PC-3 (cell line): ENCODE measurements at regions of chr4 and their contacts with region 1.

Region 1: GRCh38 chr4:68655764-68656444 is 14.5 kb downstream of the UGT2B15 start:
- DNase-seq: peak; percentile 90
- ATAC-seq: peak; percentile 72
- H3K4me3 ChIP-seq: peak overlapping the region; percentile 46
- H3K27ac ChIP-seq: peak overlapping the region; percentile 86
- H3K4me1 ChIP-seq: peaks cover 36% of the 10 kb centered on the region
- H3K27me3 ChIP-seq: no peaks in the 10 kb centered on the region
- CTCF ChIP-seq: no peak

Region 2: DNA sequence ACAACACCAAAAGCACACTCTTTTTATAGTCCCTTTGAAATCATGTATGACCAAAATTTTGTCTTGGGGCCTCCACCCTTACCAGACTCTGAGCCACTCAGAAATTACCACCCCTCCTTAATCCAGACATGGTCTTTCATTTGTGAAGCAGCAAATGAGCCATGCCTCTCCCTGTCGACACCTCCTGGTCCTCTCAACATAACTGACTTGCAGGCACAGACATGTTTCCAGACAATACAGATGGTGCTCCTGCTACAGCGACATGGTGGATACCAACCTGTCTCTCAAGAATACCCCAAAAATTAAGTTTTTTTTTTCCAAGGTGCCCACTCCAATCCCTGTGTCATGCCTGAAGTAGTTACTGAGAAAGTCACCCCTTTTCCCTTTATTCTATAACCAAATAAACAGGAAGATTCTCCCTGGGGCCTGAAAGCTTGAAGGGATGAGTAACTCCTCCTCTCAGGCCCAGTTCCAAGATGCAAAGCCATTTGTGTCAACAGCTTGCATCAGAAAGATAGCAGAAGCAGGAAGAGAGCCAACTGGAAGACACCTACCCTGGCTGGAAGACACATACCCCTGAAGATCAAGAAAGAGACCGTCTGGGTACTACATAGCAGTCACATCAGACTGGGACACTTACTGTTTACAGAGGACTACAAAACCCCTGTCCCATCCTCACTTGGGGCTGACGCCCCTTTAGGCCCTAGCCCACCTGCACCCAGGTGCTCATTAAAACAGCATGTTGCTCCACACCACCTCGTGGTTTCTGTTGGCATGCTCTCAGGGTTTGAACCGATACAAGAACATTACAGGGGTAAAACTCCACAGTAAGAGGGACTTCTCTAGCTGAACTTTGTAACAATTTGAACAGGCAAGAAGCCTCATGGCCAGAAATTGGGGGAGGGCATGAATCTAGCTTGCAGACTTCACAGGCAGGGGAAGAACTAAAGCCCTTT is 74.2 kb before region 1 on chr4:
- CTCF ChIA-PET with region 1: no interaction called
- POLR2A ChIA-PET with region 1: no interaction called
- intact Hi-C with region 1: no loop called
- DNase-seq: peak; percentile 36
- ATAC-seq: no peak
- H3K4me3 ChIP-seq: no peak overlapping the region
- H3K27ac ChIP-seq: peak overlapping the region; percentile 27
- H3K4me1 ChIP-seq: peaks cover 9% of the 10 kb centered on the region; the same call in 1 of the 2 replicates
- H3K27me3 ChIP-seq: no peaks in the 10 kb centered on the region
- CTCF ChIP-seq: no peak

Region 3: GRCh38 chr4:68630373-68630772 is 25.5 kb before region 1 on chr4:
- CTCF ChIA-PET with region 1: no interaction called
- POLR2A ChIA-PET with region 1: no interaction called
- intact Hi-C with region 1: no loop called
- DNase-seq: peak; percentile 36
- ATAC-seq: no peak
- H3K4me3 ChIP-seq: no peak overlapping the region
- H3K27ac ChIP-seq: no peak overlapping the region
- H3K4me1 ChIP-seq: no peaks in the 10 kb centered on the region
- H3K27me3 ChIP-seq: no peaks in the 10 kb centered on the region
- CTCF ChIP-seq: no peak

Region 4: GRCh38 chr4:68810919-68811318 is 155.0 kb after region 1 on chr4:
- CTCF ChIA-PET with region 1: no interaction called
- POLR2A ChIA-PET with region 1: no interaction called
- intact Hi-C with region 1: loop called (anchors 5 kb)
- DNase-seq: no peak
- ATAC-seq: no peak
- H3K4me3 ChIP-seq: no peak overlapping the region
- H3K27ac ChIP-seq: no peak overlapping the region
- H3K4me1 ChIP-seq: no peaks in the 10 kb centered on the region
- H3K27me3 ChIP-seq: no peaks in the 10 kb centered on the region
- CTCF ChIP-seq: no peak

Region 5: GRCh38 chr4:68864438-68865187 is 208.7 kb after region 1 on chr4:
- CTCF ChIA-PET with region 1: no interaction called
- POLR2A ChIA-PET with region 1: no interaction called
- intact Hi-C with region 1: loop called (anchors 10 kb)
- DNase-seq: peak; percentile 48
- ATAC-seq: peak; percentile 71
- H3K4me3 ChIP-seq: no peak overlapping the region
- H3K27ac ChIP-seq: peak overlapping the region; percentile 42
- H3K4me1 ChIP-seq: peaks cover 21% of the 10 kb centered on the region
- H3K27me3 ChIP-seq: no peaks in the 10 kb centered on the region
- CTCF ChIP-seq: no peak

Region 6: DNA sequence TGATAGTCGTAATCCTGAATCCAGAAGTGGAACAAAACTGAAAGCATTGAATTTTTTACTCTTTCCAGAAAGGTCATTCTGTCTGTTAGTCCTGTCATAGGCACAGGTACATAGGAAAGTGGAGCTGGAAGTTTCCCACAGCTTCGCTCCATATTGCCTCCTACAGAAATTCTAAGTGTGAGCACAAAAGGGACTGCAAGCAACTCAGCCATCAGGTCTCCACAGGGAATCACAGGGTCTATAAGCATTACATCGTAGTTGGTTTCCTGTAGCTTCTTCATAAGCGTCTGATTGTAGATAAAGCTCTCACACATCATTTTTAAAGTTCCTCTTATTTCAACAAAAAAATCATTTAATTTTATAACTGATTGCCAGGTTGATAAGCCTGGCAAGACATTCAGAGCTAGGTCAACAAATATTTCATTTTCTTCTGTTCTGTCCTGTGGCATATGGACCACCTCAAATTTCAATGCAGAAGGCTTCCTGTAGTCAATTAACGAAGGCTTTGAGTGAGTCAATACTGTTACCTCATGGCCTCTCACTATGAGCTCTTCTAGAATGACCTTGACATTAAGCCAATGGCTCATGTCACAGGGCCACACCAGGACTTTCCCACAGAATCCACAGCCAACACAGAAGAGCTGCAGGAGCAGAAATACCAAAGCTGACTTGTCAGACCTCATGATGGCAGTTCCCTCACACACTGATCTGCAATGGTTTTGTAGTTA is 295.3 kb after region 1 on chr4 and contains the start of gene UGT2A3:
- CTCF ChIA-PET with region 1: no interaction called
- POLR2A ChIA-PET with region 1: no interaction called
- intact Hi-C with region 1: loop called (anchors 10 kb)
- DNase-seq: no peak
- ATAC-seq: no peak
- H3K4me3 ChIP-seq: no peak within 1 kb of the TSS
- H3K27ac ChIP-seq: no peak within 1 kb of the TSS
- H3K4me1 ChIP-seq: no peaks in the 10 kb centered on the region
- H3K27me3 ChIP-seq: no peaks in the 10 kb centered on the region
- CTCF ChIP-seq: no peak
- total RNA-seq, gene UGT2A3: not detected in 2 replicates

Region 7: GRCh38 chr4:69167300-69167699 is 511.4 kb after region 1 on chr4:
- CTCF ChIA-PET with region 1: no interaction called
- POLR2A ChIA-PET with region 1: no interaction called
- intact Hi-C with region 1: loop called (anchors 2 kb)
- DNase-seq: no peak
- ATAC-seq: no peak
- H3K4me3 ChIP-seq: no peak overlapping the region
- H3K27ac ChIP-seq: no peak overlapping the region
- H3K4me1 ChIP-seq: no peaks in the 10 kb centered on the region
- H3K27me3 ChIP-seq: no peaks in the 10 kb centered on the region
- CTCF ChIP-seq: no peak

Region 8: DNA sequence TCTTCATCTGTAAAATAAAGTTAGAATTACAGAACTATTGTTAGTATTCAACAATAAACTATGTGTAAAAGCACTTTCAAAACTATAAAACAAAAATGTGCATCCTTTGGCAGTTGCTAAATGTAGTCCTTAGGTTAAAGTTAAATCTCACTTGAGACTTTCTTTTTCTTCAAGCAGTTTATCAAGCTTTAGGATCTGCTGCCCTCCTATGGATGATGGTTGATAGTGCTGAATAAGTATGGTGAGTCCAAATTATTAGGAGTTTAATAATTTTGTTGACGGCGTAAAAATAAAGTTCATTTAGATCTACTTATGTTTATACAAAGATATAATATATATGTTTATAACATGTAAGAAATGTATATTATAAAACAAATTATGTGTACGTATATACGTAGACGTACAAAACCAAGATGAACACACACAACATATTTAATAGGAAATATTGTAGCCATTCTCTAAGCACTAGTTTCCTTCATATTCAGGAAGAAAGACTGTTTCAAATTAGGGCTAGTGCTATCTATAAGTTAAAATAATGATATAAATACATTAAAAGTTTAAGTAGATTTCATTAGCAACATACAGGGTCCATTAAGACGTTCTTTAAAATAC is 961.3 kb after region 1 on chr4:
- CTCF ChIA-PET with region 1: no interaction called
- POLR2A ChIA-PET with region 1: no interaction called
- intact Hi-C with region 1: loop called (anchors 10 kb)
- DNase-seq: peak; percentile 76
- ATAC-seq: peak; percentile 51
- H3K4me3 ChIP-seq: no peak overlapping the region
- H3K27ac ChIP-seq: no peak overlapping the region
- H3K4me1 ChIP-seq: no peaks in the 10 kb centered on the region
- H3K27me3 ChIP-seq: peaks cover 11% of the 10 kb centered on the region; the same call in 1 of the 2 replicates
- CTCF ChIP-seq: peak; percentile 83